Dorsolateral prefrontal cortex (tissue), 120 donors: ENCODE measurements at regions of chr10 and their contacts with region 1.

Region 1: DNA sequence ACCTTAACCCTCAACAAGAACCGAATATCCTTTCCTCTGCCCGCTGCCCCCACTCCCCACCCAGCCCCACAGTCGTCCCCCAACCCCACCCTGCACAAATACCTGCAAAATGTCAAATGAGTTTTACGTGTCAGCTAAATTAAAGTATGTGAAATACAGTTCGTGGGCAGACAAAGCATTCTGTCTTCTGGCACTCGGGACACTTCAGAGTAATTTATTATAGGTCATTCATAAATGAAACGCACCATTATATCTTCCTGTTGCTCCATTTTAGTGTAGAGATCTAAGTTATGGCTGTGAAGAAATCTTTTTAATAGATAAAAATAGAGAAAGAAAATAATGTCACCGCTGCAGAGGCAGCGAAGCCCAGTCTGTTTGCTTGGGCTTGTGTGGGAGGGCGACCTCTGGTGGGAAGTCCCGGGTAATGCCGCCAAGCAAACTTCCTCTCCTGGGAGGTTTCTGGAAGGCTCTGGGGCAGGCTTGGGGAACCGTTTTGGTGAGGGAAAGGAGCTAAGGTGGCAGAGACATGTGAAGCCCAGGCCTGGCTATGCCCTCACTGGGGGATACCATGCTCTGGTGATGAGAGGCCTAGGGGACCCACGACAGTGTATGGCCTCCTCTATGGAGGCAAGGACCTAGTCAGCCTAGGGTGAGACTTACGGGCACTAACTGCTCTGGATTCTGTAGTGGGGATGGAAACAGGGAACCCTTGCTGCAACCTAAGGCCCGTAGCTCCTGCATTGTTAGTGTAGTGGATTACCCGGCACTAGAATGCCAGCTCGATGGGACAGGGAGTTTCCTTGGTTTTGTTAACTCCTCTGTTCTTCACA is 604.9 kb downstream of the LRMDA start:
- DNase-seq: peak; percentile 39 to 82 (median 67)
- H3K4me3 ChIP-seq: peak overlapping the region in 54 of 59 donors; percentile 3 to 60 (median 41)
- H3K27ac ChIP-seq: peak overlapping the region in 5 of 59 donors; percentile 9 to 25 (median 18)
- H3K27me3 ChIP-seq: peaks cover 0 to 25% (median 0%) of the 10 kb centered on the region in 45 donors
- CTCF ChIP-seq: peak; percentile 81 to 96 (median 91)

Region 2: DNA sequence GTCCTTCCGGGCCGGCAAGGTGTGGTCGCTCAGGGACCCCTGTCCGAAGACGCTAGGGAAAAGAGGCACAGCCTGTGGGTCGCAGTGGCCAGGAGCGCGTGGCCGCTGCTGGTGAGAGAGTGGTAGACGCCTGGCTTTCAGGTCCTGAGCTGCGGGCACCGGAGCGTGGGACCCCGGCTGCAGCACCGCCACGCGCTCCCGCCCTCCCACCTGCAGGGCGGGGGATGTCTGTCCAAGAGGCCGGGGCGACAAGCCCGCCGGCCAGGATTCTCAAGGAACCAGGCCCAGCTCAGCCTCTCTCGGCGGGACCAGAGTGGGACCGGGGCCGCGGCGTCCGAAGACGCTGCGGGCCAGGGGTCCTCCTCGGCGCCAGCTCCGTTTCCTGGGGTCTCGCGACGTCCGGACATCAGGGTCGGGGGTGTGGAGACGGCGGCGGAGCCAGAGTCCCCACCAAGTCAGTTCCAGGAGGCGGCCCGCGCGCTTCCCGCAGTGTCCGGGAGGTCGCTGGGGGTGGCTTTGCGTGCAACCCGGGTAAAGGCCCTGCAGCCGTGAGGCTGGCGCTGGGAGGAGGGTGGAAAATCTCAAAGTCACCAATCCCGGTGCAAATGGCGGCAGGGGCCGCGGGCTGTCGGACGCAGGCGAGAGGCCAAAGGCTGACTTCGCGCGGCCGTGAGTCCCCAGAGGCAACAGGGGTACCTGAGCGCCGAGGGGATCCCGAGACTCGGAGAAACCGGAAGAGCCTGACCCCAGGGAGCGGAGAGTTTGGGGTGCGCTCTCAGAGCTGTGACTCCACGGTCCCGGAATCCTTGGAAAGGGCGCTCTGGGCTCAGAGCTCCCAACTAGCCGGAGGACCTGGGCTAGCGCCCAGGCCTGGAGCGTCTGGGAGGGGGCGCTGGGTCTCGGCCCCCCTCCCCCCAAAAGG is 640.1 kb before region 1 on chr10:
- intact Hi-C with region 1: loop called (anchors 2 to 5 kb)
- DNase-seq: no peak
- H3K4me3 ChIP-seq: peak overlapping the region in 52 of 59 donors; percentile 1 to 88 (median 36)
- H3K27ac ChIP-seq: peak overlapping the region in 38 of 59 donors; percentile 1 to 96 (median 38)
- H3K27me3 ChIP-seq: peaks cover 0 to 52% (median 18%) of the 10 kb centered on the region in 45 donors
- CTCF ChIP-seq: no peak

Region 3: GRCh38 chr10:75593692-75594556 is 442.4 kb before region 1 on chr10:
- intact Hi-C with region 1: no loop called
- DNase-seq: no peak
- H3K4me3 ChIP-seq: no peak overlapping the region
- H3K27ac ChIP-seq: no peak overlapping the region
- H3K27me3 ChIP-seq: peaks cover 0 to 5% (median 0%) of the 10 kb centered on the region in 45 donors
- CTCF ChIP-seq: peak in 2 of 56 donors; percentile 10 to 14

Region 4: DNA sequence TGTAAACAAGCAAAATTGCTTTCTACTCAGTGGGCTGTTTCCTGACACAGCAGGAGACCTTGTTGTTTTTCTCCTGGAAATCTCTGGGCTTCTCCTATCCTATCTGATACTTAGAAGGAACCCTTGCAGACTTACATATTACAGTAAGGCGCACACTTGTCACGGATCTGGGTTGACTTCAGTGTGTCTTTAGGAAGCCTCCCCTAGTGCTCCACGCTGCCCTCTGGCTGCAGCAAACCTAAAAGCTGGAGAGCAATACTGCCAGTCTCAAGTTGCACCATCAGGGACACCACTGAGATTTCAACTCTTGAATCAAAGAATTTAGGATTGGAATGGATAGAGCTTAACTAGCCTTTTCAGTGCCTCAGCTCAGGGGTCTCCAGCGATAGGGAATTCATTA is 109.6 kb before region 1 on chr10:
- intact Hi-C with region 1: loop called in 1 of 2 experiments (anchors 5 kb)
- DNase-seq: peak in 2 of 10 donors; percentile 30 to 53
- H3K4me3 ChIP-seq: no peak overlapping the region
- H3K27ac ChIP-seq: no peak overlapping the region
- H3K27me3 ChIP-seq: peaks cover 0 to 25% (median 0%) of the 10 kb centered on the region in 45 donors
- CTCF ChIP-seq: peak in 23 of 56 donors; percentile 29 to 72 (median 53)

Region 5: DNA sequence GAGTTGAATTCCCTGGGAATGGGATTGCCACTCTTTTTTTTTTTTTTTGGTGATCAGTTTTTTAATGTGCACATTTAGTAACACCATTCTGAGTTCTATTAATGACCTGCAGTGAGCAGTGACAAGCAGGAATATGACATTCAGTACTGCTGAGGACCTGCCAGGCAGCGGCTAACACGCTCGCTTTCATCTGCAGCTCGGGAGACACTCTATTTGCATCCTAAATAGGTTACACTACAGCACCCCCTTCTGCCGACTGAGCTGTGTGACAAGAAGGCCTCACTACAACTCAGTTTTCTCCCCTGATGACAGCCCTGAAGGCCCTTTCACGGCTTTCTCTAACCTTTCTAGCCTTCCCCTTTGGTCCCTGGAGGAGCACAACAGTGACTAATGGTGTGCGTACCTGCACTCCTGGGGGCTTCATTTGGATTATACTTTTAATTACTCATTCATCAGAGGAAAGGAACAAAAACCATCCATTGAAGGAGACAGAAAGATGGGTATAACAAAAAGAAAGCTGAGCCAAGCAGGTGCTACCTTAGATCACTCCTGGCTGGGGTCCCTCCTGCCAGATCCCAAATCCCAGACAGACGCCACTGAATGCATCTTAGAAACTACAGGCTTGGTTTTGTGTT is 267.5 kb after region 1 on chr10:
- intact Hi-C with region 1: loop called in 1 of 2 experiments (anchors 10 kb)
- DNase-seq: peak in 9 of 10 donors; percentile 49 to 76 (median 65)
- H3K4me3 ChIP-seq: peak overlapping the region in 7 of 59 donors; percentile 5 to 27 (median 12)
- H3K27ac ChIP-seq: peak overlapping the region in 2 of 59 donors; percentile 17 to 26
- H3K27me3 ChIP-seq: peaks cover 0 to 7% (median 0%) of the 10 kb centered on the region in 45 donors
- CTCF ChIP-seq: peak in 55 of 56 donors; percentile 29 to 72 (median 56)